ENCODE measurements at regions of chr13 and their contacts with region 1.

Region 1: DNA sequence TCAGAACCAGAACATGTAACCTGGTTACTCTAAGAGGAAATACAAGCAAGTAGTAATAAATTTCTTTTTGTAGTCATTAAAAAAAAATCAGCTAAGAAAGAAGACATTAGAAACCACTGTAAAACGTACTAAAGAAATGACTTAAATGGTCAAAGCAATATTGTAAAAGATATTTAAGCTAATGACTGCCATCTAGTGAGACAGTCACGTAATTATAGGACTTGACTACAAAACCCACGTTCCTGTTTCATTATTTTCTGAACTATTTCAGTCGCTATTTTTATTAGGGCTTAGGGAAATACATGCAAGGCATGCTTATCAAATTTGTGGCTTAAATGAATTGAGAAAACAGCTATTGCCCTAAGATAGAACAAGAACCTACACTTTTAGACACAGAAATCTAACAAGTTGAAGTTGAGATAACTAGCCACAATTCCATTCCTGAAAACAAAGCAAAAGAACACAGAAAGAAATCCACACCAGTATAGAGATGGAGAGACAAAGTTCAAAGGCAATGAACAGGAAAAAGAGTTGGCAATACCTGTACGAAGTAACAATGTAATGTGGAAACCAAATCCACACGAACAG is 17.9 kb downstream of the ALG5 start:
- DNase-seq: peak; percentile 47
- CTCF ChIP-seq: peak; percentile 37

Region 2: DNA sequence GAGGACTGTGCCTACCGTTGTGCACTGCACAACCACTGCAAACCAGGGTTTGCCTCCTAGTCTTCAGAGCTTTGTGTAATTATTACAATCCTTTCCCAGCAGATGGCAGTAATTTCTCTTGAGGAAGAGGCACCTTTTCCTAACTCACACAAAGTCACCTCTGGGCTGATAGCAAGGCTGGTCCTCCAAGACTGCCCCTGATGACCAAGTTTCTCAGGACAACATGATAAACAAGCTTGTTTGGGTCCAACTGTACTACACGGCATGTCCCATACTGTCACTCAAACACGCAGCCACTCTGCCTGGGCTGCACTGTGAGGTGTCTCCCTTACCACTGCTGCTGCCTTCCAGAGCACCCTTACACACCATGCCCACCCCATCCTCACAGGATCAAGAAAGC is 123.0 kb before region 1 on chr13:
- in situ Hi-C with region 1: loop called (anchors 10 kb)
- DNase-seq: peak; percentile 37
- CTCF ChIP-seq: peak; percentile 20